ENCODE measurements at regions of chr15 and their contacts with region 1.

Region 1: GRCh38 chr15:88454867-88455810 is 12.0 kb downstream of the MRPL46 start:
- DNase-seq: peak; percentile 79
- H3K4me3 ChIP-seq: no peak overlapping the region
- H3K27ac ChIP-seq: no peak overlapping the region; a peak in 1 of 4 replicates
- H3K4me1 ChIP-seq: peaks cover 0 to 12% of the 10 kb centered on the region in 2 experiments; a peak in 1 of 4 replicates
- H3K27me3 ChIP-seq: no peaks in the 10 kb centered on the region
- CTCF ChIP-seq: peak; percentile 70
- EP300 ChIP-seq: peak in 1 of 2 experiments; percentile 39; a peak in 1 of 4 replicates
- RAD21 ChIP-seq: peak; percentile 82

Region 2: GRCh38 chr15:86915811-86916331 is 1539.3 kb before region 1 on chr15:
- CTCF ChIA-PET with region 1: interaction called, 11 read pairs
- POLR2A ChIA-PET with region 1: no interaction called
- DNase-seq: peak; percentile 65
- H3K4me3 ChIP-seq: no peak overlapping the region
- H3K27ac ChIP-seq: no peak overlapping the region
- H3K4me1 ChIP-seq: no peaks in the 10 kb centered on the region; a peak in 1 of 4 replicates
- H3K27me3 ChIP-seq: no peaks in the 10 kb centered on the region
- CTCF ChIP-seq: peak; percentile 62
- EP300 ChIP-seq: no peak
- RAD21 ChIP-seq: peak; percentile 83

Region 3: GRCh38 chr15:88258093-88258641 is 197.0 kb before region 1 on chr15:
- CTCF ChIA-PET with region 1: interaction called, 195 read pairs
- POLR2A ChIA-PET with region 1: no interaction called
- DNase-seq: peak; percentile 66
- H3K4me3 ChIP-seq: peak overlapping the region in 1 of 2 experiments; percentile 64; a peak in 2 of 4 replicates
- H3K27ac ChIP-seq: no peak overlapping the region
- H3K4me1 ChIP-seq: peaks cover 0 to 18% of the 10 kb centered on the region in 2 experiments; a peak in 1 of 4 replicates
- H3K27me3 ChIP-seq: peaks cover 32% of the 10 kb centered on the region; the same call in 1 of the 2 replicates
- CTCF ChIP-seq: peak; percentile 38; the same call in 1 of the 2 replicates
- EP300 ChIP-seq: no peak
- RAD21 ChIP-seq: 0 out of 2 replicates have a peak, but pooled peaks have one; percentile 8

Region 4: GRCh38 chr15:88382482-88382983 is 72.6 kb before region 1 on chr15:
- CTCF ChIA-PET with region 1: interaction called, 12 read pairs
- POLR2A ChIA-PET with region 1: no interaction called
- DNase-seq: peak; percentile 27
- H3K4me3 ChIP-seq: no peak overlapping the region
- H3K27ac ChIP-seq: no peak overlapping the region
- H3K4me1 ChIP-seq: peaks cover 0 to 9% of the 10 kb centered on the region in 2 experiments; a peak in 1 of 4 replicates
- H3K27me3 ChIP-seq: no peaks in the 10 kb centered on the region
- CTCF ChIP-seq: no peak
- EP300 ChIP-seq: no peak
- RAD21 ChIP-seq: no peak

Region 5: DNA sequence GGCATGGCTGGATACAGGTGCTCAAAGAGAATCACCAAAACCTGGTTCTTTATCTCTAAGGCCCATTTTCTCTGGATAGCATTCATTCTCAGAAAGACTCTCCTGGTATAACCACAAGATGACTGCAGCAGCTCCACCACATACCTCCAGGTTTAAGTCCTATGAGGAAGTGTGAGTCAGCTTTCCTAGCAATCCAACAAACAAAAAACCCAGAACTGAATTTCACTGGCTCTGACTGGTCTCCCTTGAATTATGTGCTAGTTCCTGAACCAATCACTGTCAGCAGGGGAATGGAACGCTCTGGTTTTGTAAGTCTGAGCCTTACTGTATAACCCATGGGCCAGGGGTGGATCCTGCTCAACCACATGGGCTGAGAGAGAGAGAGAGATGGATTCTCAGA is 15.1 kb before region 1 on chr15:
- CTCF ChIA-PET with region 1: interaction called, 18 read pairs
- POLR2A ChIA-PET with region 1: no interaction called
- DNase-seq: no peak
- H3K4me3 ChIP-seq: no peak overlapping the region
- H3K27ac ChIP-seq: no peak overlapping the region
- H3K4me1 ChIP-seq: no peaks in the 10 kb centered on the region
- H3K27me3 ChIP-seq: no peaks in the 10 kb centered on the region
- CTCF ChIP-seq: no peak
- EP300 ChIP-seq: no peak
- RAD21 ChIP-seq: no peak

Measured in SK-N-SH (cell line).